Activated T-helper 1 cell treated with anti-CD3 and anti-CD28 coated beads, Interleukin-12 subunit alpha, Interleukin-12 subunit beta, Interleukin-2, Interleukin-4 antibody, amounts not matched to agents 30 ng/mL and 10 ng/mL and 1 ng/mL, durations not matched to agents 14 hours and 24 hours and 36 hours (primary cell): ENCODE measurements at regions of chr12 and their contacts with region 1.

Region 1: GRCh38 chr12:50825372-50825838 is 17.3 kb upstream of the TMPRSS12 start:
- DNase-seq: no peak
- H3K4me3 Mint-ChIP-seq: no peak overlapping the region
- H3K27ac Mint-ChIP-seq: peak overlapping the region; percentile 69
- H3K4me1 Mint-ChIP-seq: peaks cover 10% of the 10 kb centered on the region
- H3K27me3 Mint-ChIP-seq: no peaks in the 10 kb centered on the region

Region 2: DNA sequence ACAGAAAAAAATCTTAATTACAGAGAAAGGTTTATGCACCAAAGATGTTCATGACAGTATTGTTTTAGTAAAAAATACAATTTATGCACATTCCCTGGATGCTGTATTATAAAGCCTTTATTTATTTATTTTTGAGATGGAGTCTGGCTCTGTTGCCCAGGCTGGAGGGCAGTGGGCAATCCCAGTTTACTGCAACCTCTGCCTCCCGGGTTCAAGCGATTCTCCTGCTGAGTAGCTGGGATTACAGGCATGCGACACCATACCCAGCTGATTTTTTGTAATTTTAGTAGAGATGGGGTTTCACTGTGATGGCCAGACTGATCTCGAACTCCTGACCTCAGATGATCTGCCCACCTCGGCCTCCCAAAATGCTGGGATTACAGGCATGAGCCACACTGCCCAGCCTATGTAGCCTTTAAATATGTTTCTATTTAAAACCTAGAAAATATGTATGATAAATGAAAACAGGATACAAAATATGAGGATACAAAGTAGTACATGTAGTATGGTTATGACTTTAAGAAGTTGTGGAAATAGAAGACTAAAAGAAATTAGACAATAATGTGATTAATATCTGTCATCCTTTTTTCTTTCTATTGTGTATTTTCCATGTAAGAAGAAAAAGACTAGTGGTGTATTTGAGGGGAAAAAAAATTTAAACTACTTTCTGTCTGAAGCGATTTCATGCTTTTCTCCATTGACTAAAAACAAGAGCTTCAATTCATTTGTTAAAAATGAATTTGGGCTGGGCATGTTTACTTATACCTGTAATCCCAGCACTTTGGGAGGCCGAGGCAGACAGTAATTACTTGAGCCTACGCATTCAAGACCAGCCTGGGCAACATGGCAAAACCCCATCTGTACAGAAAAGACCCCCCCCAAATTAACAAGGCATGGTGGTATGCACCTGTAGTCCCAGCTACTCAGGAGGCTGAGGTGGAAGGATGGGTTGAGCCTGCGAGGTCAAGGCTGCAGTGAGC is 48.4 kb before region 1 on chr12:
- intact Hi-C with region 1: loop called (anchors 1 kb)
- DNase-seq: no peak
- H3K4me3 Mint-ChIP-seq: no peak overlapping the region
- H3K27ac Mint-ChIP-seq: peak overlapping the region; percentile 70
- H3K4me1 Mint-ChIP-seq: peaks cover 6% of the 10 kb centered on the region
- H3K27me3 Mint-ChIP-seq: no peaks in the 10 kb centered on the region

Region 3: GRCh38 chr12:50924439-50925341 is 99.3 kb after region 1 on chr12:
- intact Hi-C with region 1: loop called (anchors 5 kb)
- DNase-seq: peak; percentile 3
- H3K4me3 Mint-ChIP-seq: peak overlapping the region; percentile 70
- H3K27ac Mint-ChIP-seq: peak overlapping the region; percentile 64
- H3K4me1 Mint-ChIP-seq: peaks cover 27% of the 10 kb centered on the region
- H3K27me3 Mint-ChIP-seq: no peaks in the 10 kb centered on the region

Region 4: DNA sequence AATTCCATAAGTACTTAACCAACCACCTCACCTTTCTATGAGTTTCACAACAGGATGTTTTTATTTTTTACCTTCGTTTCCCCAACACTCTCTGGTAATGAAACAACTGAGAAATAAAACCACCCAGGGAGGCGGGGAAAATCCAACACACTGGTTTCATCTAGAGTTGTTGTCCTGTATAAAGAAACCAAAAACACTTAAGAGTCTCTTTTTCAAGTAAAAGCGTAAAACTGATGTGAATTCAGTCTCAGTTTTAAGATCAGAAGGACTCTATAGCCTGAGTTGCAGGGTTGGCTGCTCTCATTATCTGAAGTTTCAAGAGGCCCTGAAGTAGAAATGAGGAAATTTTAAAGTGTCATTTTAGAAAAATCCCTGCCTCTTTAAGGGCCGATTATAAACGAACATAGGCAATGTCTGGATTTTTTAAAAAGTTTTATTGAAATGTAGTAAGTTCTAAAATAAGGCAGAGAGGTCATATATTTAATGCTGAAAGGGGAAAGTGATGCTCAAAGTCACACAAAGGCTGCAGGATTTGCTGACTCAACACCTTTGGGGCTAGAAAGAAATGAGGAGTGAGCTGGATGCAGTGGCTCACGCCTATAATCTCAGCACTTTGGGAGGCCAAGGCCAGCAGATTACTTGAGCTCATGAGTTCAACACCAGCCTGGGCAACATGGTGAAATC is 154.1 kb after region 1 on chr12:
- intact Hi-C with region 1: loop called (anchors 2 kb)
- DNase-seq: peak; percentile 67
- H3K4me3 Mint-ChIP-seq: peak overlapping the region; percentile 71
- H3K27ac Mint-ChIP-seq: peak overlapping the region; percentile 96
- H3K4me1 Mint-ChIP-seq: peaks cover 38% of the 10 kb centered on the region
- H3K27me3 Mint-ChIP-seq: no peaks in the 10 kb centered on the region

Region 5: GRCh38 chr12:50986966-50987737 is 161.7 kb after region 1 on chr12:
- intact Hi-C with region 1: loop called (anchors 1 kb)
- DNase-seq: peak; percentile 29
- H3K4me3 Mint-ChIP-seq: no peak overlapping the region
- H3K27ac Mint-ChIP-seq: peak overlapping the region; percentile 80
- H3K4me1 Mint-ChIP-seq: peaks cover 48% of the 10 kb centered on the region
- H3K27me3 Mint-ChIP-seq: no peaks in the 10 kb centered on the region

Region 6: DNA sequence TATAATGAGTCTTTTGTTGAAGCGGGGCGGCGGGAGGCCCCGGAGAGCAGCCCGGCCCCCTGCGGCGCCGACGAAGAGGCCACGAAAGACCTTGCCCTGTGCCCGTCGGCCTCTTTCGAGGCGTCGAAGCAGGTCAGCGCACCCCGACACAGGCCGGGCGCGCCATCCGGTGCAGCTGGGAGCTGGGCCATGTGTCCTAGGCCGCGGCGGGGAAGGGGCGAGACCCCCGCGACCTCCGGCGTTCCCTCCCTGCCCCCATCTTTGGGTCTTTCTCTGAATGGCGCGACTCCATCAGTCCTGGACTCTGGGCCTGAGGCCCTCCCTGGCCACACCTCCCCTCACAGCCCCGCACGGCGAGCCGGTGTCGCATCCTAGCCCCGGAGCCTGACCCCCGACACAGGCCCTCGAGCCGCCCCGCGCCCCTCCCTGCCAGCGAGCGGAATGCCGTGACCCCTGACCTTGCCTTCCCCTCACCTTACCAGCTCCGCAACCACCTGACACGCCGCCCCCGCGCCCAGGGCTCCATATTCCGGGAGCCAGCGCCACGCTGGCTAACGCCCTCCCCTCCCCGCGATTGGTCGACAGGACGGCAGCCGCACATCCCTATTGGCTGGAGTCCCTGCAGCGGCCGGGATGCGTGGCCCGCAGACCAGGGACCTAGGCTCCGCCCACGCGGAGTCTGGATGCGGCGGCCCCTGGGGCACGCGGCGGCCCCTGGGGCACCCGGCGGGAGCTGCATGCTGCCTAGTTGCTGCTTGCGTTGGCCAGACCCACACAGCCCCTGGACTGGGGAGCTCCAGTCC is 200.6 kb after region 1 on chr12 and contains the start of gene SLC11A2:
- intact Hi-C with region 1: loop called (anchors 1 kb)
- DNase-seq: peak; percentile 91
- H3K4me3 Mint-ChIP-seq: peak within 1 kb of the TSS; percentile 92
- H3K27ac Mint-ChIP-seq: peak within 1 kb of the TSS; percentile 98
- H3K4me1 Mint-ChIP-seq: peaks cover 55% of the 10 kb centered on the region
- H3K27me3 Mint-ChIP-seq: peaks cover 18% of the 10 kb centered on the region
- total RNA-seq, gene SLC11A2: 56.9 and 63.9 TPM in 2 replicates

Region 7: GRCh38 chr12:51341259-51342007 is 516.0 kb after region 1 on chr12:
- intact Hi-C with region 1: loop called (anchors 1 kb)
- DNase-seq: peak; percentile 63
- H3K4me3 Mint-ChIP-seq: no peak overlapping the region
- H3K27ac Mint-ChIP-seq: no peak overlapping the region
- H3K4me1 Mint-ChIP-seq: peaks cover 12% of the 10 kb centered on the region
- H3K27me3 Mint-ChIP-seq: peaks cover 6% of the 10 kb centered on the region